ENCODE measurements at regions of chr11 and their contacts with region 1.

Region 1: GRCh38 chr11:19814421-19814820 is 101.8 kb downstream of the NAV2 start:
- DNase-seq: no peak
- H3K4me3 ChIP-seq: no peak overlapping the region
- H3K27ac ChIP-seq: peak overlapping the region in 1 of 4 donors; percentile 35
- H3K4me1 ChIP-seq: peaks cover 0 to 87% (median 66%) of the 10 kb centered on the region in 4 donors
- H3K27me3 ChIP-seq: no peaks in the 10 kb centered on the region
- CTCF ChIP-seq: no peak
- EP300 ChIP-seq: no peak
- POLR2A ChIP-seq: no peak

Region 2: DNA sequence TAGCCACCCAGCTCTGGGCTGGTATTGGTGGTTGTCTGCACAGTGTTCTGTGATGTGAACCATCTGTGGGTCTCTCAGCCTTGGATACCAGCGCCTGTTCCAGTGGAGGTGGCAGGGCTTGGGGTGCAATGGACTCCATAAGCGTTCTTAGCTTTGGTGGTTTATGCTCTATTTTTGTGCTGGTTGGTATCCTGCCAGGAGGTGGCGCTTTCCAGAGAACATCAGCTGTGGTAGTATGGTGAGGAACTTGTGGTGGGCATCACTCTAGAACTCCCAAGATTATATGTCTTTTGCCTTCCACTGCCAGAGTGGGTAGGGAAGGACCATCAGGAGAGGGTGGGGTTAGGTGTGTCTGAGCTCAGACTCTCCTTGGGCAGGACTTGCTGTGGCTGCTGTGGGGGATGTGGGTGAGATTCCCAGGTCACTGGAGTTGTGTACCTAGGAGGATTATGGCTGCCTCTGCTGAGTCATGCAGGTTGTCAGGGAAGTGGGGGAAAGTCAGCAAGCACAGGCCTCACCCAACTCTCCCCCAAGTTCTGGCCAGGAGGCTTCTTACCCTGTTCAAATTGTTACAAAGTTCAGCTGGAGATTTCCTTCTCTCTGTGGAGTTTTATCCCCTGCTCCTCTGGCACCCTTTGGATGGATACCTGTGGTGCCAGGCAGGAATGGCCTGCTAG is 801.1 kb before region 1 on chr11:
- intact Hi-C with region 1: no loop called
- DNase-seq: no peak
- H3K4me3 ChIP-seq: no peak overlapping the region
- H3K27ac ChIP-seq: no peak overlapping the region
- H3K4me1 ChIP-seq: no peaks in the 10 kb centered on the region
- H3K27me3 ChIP-seq: no peaks in the 10 kb centered on the region
- CTCF ChIP-seq: no peak
- EP300 ChIP-seq: no peak
- POLR2A ChIP-seq: no peak

Region 3: DNA sequence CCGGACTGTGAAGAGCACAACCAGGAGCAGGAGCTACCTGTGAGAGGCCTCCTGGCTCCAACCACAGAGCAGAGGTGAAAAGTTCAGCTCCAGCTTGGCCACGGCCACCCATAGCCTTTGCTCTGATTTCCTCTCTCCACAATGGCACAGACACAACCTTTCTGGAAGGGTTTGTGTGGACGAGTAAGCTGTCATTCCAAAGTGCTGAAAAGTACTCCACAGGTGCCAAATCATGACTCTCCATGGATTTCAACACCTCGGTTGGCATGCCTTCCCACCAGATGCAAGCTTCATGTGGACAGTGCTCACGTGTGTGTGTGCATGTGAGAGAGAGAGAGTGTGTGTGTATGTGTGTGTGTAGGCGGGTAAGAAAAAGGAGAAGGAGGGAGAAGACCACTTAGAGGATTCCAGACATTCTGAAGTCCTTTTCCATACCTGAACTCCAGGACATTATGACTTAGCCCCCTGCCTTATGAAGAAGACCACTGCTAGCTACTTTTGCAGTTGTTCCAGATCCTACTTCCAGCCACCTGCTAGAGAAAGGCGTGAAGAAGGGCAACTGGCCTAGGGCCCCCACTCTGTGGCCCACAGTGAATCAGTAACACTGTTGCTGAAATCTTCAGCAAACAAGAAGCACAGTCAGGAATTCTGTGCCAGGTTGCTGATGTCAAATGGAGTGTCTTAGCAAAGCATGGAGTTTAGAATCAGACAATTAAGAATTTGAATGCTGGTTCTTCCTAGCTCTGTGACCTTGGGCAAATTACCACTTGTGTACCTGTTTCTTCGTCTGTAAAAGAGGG is 115.7 kb before region 1 on chr11:
- intact Hi-C with region 1: no loop called
- DNase-seq: peak; percentile 89
- H3K4me3 ChIP-seq: no peak overlapping the region
- H3K27ac ChIP-seq: peak overlapping the region; percentile 36 to 98 (median 82)
- H3K4me1 ChIP-seq: peaks cover 0 to 74% (median 65%) of the 10 kb centered on the region in 4 donors
- H3K27me3 ChIP-seq: no peaks in the 10 kb centered on the region
- CTCF ChIP-seq: no peak
- EP300 ChIP-seq: no peak
- POLR2A ChIP-seq: no peak

Region 4: GRCh38 chr11:19769820-19770219 is 44.6 kb before region 1 on chr11:
- intact Hi-C with region 1: loop called (anchors 5 kb)
- DNase-seq: no peak
- H3K4me3 ChIP-seq: no peak overlapping the region
- H3K27ac ChIP-seq: no peak overlapping the region
- H3K4me1 ChIP-seq: peaks cover 0 to 54% (median 41%) of the 10 kb centered on the region in 4 donors
- H3K27me3 ChIP-seq: no peaks in the 10 kb centered on the region
- CTCF ChIP-seq: no peak
- EP300 ChIP-seq: no peak
- POLR2A ChIP-seq: no peak

Region 5: DNA sequence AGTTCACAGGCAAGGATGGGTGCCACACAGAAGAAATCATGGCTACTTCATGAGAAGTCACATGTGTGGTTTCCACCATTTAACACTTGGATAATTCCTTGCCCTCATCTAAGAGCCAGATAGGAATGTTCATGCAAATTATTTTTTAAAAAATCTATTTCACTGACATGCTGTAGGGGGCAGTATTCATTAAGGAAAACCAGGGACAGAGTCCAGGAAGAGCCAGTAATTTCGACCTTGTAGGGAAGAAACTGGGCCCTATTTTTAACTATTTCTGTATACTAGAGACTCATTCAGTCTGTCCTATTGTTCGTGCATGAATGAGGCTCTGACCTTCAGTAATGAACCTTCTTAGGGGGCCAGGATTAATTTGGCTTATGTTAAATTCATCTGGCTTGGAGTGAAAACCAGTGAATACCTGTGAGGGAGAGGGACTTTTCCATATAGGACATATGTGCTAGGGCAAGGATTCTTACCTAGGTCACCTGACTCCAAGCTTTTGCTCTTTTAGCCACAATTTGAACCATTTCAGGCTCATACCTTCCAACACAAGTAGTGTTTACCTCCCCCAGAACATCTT is 90.9 kb after region 1 on chr11:
- intact Hi-C with region 1: no loop called
- DNase-seq: no peak
- H3K4me3 ChIP-seq: no peak overlapping the region
- H3K27ac ChIP-seq: peak overlapping the region in 3 of 4 donors; percentile 63 to 66 (median 65)
- H3K4me1 ChIP-seq: peaks cover 0 to 61% (median 51%) of the 10 kb centered on the region in 4 donors
- H3K27me3 ChIP-seq: no peaks in the 10 kb centered on the region
- CTCF ChIP-seq: peak in 3 of 4 experiments; percentile 52 to 61 (median 59)
- EP300 ChIP-seq: no peak
- POLR2A ChIP-seq: no peak